Uterus (tissue), 4 donors: ENCODE measurements at regions of chr12 and their contacts with region 1.

Region 1: DNA sequence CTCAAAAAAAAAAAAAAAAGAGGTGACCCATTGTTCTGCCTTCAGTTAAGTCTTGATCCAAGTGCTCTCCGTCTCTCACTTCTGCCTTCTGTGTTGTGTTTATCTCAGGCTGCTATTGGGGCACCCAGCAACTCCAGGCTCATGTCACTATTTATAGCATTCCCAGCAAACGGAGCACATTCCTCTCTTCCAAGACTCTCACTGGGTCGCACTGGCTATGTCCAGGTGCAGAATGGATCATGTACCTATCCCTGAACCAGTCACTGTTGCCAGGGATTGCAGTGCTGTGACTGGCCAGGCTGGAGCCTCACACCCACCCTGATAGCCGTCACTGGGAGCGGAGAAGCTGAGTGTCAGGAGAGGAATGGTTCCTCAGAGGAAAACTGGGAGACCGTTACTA is 31.2 kb downstream of the RHOF start:
- DNase-seq: no peak
- H3K4me3 ChIP-seq: no peak overlapping the region
- H3K27ac ChIP-seq: peak overlapping the region in 1 of 2 donors; percentile 76
- H3K4me1 ChIP-seq: peaks cover 0 to 9% of the 10 kb centered on the region in 2 donors
- H3K27me3 ChIP-seq: no peaks in the 10 kb centered on the region
- CTCF ChIP-seq: no peak
- POLR2A ChIP-seq: no peak

Region 2: GRCh38 chr12:120317224-120318105 is 1444.8 kb before region 1 on chr12:
- intact Hi-C with region 1: loop called (anchors 5 kb)
- DNase-seq: peak; percentile 99 to 100
- H3K4me3 ChIP-seq: peak overlapping the region; percentile 53 to 55
- H3K27ac ChIP-seq: peak overlapping the region; percentile 76 to 84
- H3K4me1 ChIP-seq: peaks cover 0 to 4% of the 10 kb centered on the region in 2 donors
- H3K27me3 ChIP-seq: no peaks in the 10 kb centered on the region
- CTCF ChIP-seq: peak; percentile 52 to 75 (median 67)
- POLR2A ChIP-seq: peak; percentile 91 to 93

Region 3: DNA sequence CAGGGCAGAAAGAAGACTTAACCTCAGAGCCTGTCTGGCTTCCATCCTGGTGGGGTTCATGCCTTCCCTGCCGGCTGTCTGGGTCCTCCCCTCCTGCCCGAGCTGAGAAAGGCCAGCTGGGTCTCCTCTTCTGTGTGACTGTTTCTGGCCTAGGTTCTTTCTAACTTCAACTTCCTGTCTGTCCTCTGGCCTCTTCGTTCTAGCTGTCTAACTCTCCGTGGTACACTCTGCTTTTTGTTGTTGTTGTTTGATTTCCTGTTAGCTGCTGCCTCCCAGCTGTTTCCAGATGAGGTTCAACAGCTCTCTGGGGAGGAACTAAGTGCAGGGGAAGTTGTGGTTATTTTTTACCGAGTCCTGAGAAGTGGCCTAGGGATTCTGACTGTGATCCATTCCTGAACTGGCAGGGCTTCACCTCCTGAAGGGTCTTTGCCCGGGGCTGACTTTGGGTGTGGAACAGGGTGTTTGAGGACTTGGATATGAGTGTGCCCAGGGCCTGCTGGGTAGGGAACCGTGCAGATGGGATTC is 319.5 kb after region 1 on chr12:
- intact Hi-C with region 1: no loop called
- DNase-seq: peak; percentile 61
- H3K4me3 ChIP-seq: peak overlapping the region; percentile 78 to 82
- H3K27ac ChIP-seq: peak overlapping the region; percentile 85
- H3K4me1 ChIP-seq: peaks cover 5 to 9% of the 10 kb centered on the region in 2 donors
- H3K27me3 ChIP-seq: no peaks in the 10 kb centered on the region
- CTCF ChIP-seq: peak in 3 of 4 experiments; percentile 4 to 36 (median 32)
- POLR2A ChIP-seq: no peak